ENCODE measurements at regions of chr11 and their contacts with region 1.

Region 1: GRCh38 chr11:6353367-6353987 is 33.2 kb upstream of the CAVIN3 start:
- DNase-seq: peak; percentile 44
- H3K4me3 Mint-ChIP-seq: no peak overlapping the region
- H3K27ac Mint-ChIP-seq: peak overlapping the region; percentile 34
- H3K4me1 Mint-ChIP-seq: peaks cover 45% of the 10 kb centered on the region
- H3K27me3 Mint-ChIP-seq: no peaks in the 10 kb centered on the region

Region 2: GRCh38 chr11:5808500-5809121 is 544.9 kb before region 1 on chr11 and contains the start of gene OR52N2:
- intact Hi-C with region 1: loop called (anchors 5 kb)
- DNase-seq: peak; percentile 53
- H3K4me3 Mint-ChIP-seq: peak within 1 kb of the TSS; percentile 84
- H3K27ac Mint-ChIP-seq: no peak within 1 kb of the TSS
- H3K4me1 Mint-ChIP-seq: peaks cover 12% of the 10 kb centered on the region
- H3K27me3 Mint-ChIP-seq: peaks cover 20% of the 10 kb centered on the region
- total RNA-seq, gene OR52N2: not detected in 2 replicates

Region 3: GRCh38 chr11:6022956-6023355 is 330.5 kb before region 1 on chr11:
- intact Hi-C with region 1: loop called (anchors 2 kb)
- DNase-seq: no peak
- H3K4me3 Mint-ChIP-seq: no peak overlapping the region
- H3K27ac Mint-ChIP-seq: no peak overlapping the region
- H3K4me1 Mint-ChIP-seq: no peaks in the 10 kb centered on the region
- H3K27me3 Mint-ChIP-seq: peaks cover 30% of the 10 kb centered on the region

Region 4: DNA sequence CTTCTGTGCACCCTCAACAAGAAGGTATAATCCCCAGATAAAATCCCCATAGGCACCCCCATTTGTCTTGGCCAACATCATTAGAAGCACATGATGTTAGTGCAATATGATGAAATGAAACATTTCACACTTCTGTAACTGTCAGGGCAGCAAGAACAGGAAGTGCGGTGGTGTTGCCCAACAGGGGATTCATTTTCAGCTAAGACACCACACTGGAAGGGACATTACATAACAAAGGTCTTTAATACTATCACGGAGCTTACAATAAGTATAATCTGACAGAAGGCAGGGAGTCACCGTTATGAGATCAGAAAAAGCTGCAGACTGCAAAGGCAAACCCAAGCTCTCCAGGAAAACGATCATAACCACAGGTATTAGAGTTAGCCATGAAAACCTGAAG is 152.5 kb before region 1 on chr11:
- intact Hi-C with region 1: loop called (anchors 2 kb)
- DNase-seq: no peak
- H3K4me3 Mint-ChIP-seq: no peak overlapping the region
- H3K27ac Mint-ChIP-seq: peak overlapping the region; percentile 52
- H3K4me1 Mint-ChIP-seq: peaks cover 43% of the 10 kb centered on the region
- H3K27me3 Mint-ChIP-seq: peaks cover 2% of the 10 kb centered on the region

Region 5: GRCh38 chr11:6251120-6251733 is 102.2 kb before region 1 on chr11:
- intact Hi-C with region 1: loop called (anchors 1 kb)
- DNase-seq: peak; percentile 31
- H3K4me3 Mint-ChIP-seq: no peak overlapping the region
- H3K27ac Mint-ChIP-seq: no peak overlapping the region
- H3K4me1 Mint-ChIP-seq: no peaks in the 10 kb centered on the region
- H3K27me3 Mint-ChIP-seq: no peaks in the 10 kb centered on the region

Region 6: DNA sequence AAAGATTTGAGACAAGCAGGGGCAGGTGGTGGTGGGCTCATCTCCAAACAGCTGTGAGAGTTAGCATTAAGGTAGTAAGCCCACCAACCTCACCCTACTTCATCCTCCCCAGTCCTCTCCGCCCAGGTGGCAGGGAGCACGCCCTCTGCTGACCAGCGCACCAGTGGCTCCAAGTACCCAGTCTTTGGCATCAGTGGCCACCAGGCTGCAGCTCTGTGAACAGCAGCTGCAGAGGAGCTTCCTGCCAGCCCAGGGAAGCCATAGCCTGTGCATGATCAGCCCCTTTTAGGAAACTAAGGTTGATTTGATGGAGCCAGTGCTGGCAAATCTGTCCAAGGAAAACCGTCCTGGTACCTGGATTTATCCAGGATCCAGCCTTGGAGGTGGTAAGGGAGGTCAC is 54.9 kb before region 1 on chr11:
- intact Hi-C with region 1: loop called (anchors 1 kb)
- DNase-seq: no peak
- H3K4me3 Mint-ChIP-seq: no peak overlapping the region
- H3K27ac Mint-ChIP-seq: no peak overlapping the region
- H3K4me1 Mint-ChIP-seq: no peaks in the 10 kb centered on the region
- H3K27me3 Mint-ChIP-seq: peaks cover 5% of the 10 kb centered on the region

Region 7: DNA sequence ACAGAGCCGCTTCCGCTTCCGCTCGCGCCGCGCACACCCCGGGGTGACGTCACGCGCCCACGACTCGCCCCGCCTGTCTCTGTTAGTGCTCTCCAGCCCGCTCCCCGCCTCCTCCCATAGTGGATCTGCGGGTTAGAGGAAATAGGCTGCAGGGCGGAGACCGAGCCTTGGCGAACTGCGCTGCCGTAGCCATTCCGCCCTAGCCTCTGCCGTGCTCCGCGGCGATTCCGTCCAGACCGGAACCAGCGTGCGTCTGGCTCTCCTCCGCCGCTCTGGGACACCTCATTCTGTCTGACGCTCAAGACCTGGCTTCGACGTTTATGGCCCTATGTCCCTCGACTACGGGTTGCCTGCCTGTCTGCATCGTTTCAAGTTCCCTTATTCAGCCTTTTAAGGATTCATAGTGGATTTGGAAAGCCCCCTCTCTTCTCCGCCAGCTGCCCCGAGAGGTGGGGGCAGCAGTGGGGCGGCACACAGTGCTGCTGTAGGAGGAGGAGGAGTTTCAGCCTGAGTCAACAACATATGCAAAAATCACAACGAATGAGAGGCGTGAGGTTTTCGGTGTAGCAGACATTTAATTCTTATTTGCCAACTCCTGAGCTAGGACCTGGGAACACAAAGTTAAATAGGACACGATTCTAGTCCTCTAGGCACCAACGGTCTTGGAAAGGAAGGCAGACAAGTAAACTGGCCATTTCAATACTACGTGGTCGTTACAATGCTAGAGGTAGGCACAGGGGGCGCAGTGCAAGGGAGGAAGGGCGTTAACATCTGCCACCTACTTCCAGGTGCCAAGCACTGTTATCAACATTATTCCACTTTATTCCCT is 258.9 kb after region 1 on chr11 and contains the start of gene TAF10:
- intact Hi-C with region 1: no loop called
- DNase-seq: peak; percentile 95
- H3K4me3 Mint-ChIP-seq: peak within 1 kb of the TSS; percentile 95
- H3K27ac Mint-ChIP-seq: peak within 1 kb of the TSS; percentile 83
- H3K4me1 Mint-ChIP-seq: peaks cover 30% of the 10 kb centered on the region
- H3K27me3 Mint-ChIP-seq: no peaks in the 10 kb centered on the region
- total RNA-seq, gene TAF10: 134 and 142 TPM in 2 replicates

Measured in activated T-helper 2 cell treated with anti-CD3 and anti-CD28 coated beads, Interferon-gamma antibody, Interleukin-2, Interleukin-4, amounts not matched to agents 10 μg/mL and 5 μg/mL and 100 μg/mL, durations not matched to agents 14 hours and 24 hours and 36 hours (primary cell).